Ovary (tissue), 10 donors: ENCODE measurements at regions of chr15 and their contacts with region 1.

Region 1: DNA sequence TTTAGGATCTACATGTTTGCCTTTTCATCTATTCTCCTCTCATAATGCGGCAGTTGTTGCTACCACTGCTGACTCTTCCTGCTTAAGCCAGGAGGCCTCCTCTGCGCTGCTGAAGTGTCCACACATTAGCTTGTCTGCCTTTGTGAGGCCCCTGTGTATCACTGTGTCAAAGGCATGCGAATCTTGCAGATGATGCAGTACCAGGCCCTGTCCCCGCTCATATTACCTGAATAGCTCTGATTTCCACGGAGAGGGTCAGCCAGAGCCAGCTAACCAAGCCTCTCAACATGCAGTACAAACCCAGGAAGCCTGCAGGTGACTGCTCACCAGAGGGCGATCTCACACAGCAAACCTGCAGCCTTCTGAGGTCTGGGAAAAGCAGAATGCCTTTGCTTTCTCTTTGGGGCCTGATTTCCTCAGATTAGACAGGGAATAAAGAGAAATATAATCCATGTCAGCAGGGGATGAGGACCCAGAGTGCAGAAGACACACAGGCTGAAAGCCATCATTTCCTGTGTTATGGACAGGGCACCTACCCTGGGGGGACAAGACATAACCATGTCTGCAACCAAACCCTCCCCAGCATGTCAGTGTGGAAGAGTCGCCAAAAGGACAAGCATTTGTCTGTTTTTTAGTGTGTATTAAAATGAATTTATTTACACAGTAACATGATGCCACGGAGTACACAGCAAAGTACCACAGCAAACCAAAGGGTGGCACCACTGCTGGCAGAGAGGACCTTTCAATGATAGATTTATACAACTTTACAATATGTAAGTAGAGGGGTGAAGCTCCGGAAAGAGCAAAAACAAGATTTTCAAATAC is 36.8 kb upstream of the TSPAN3 start:
- DNase-seq: peak; percentile 52 to 69 (median 62)
- H3K4me3 ChIP-seq: no peak overlapping the region
- H3K27ac ChIP-seq: no peak overlapping the region
- H3K4me1 ChIP-seq: peaks cover 6% of the 10 kb centered on the region
- H3K27me3 ChIP-seq: no peaks in the 10 kb centered on the region
- CTCF ChIP-seq: peak; percentile 34 to 74 (median 36)
- EP300 ChIP-seq: no peak
- POLR2A ChIP-seq: no peak

Region 2: DNA sequence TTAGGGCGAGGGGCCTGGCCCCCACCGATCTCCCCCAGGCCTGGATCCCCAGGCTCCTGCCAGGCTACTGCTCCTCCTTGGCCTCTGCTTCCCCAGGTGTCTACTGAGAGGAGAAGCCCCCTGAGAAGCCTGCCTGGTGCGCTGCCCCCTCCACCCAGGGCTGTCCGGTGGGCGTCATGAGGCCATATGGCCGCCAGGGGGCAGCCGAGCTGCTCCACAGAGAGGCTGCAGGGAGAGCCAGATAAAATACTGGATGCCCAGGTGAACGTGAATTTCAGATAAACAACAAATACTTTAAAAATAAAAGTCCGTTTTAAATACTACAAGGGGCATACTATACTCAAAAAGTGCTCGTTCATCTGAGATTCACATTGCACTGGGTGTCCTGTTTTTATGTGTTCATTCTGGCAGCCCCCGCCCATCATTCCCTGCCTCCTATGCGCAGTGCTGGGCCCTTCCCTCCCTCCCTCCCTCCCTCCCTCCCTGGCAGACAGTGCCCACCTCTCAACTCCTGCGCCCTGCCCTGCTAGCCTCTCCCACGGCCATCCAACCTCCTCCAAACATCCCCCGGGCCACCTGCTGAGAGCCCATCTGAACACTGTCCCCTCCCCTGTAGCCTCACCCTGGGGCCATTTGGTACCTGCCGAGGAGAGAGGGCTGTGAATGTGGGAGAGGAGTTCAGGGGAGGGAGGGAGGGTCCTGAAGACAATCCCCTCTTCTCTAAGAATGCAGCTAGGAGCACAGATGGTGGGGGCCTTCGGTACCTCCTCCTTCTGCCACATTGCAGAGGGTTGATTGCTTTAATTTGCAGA is 83.3 kb before region 1 on chr15:
- intact Hi-C with region 1: loop called in 1 of 4 experiments (anchors 5 kb)
- DNase-seq: peak; percentile 61 to 83 (median 77)
- H3K4me3 ChIP-seq: no peak overlapping the region
- H3K27ac ChIP-seq: no peak overlapping the region
- H3K4me1 ChIP-seq: peaks cover 4% of the 10 kb centered on the region
- H3K27me3 ChIP-seq: no peaks in the 10 kb centered on the region
- CTCF ChIP-seq: peak; percentile 79 to 94 (median 84)
- EP300 ChIP-seq: no peak
- POLR2A ChIP-seq: no peak

Region 3: DNA sequence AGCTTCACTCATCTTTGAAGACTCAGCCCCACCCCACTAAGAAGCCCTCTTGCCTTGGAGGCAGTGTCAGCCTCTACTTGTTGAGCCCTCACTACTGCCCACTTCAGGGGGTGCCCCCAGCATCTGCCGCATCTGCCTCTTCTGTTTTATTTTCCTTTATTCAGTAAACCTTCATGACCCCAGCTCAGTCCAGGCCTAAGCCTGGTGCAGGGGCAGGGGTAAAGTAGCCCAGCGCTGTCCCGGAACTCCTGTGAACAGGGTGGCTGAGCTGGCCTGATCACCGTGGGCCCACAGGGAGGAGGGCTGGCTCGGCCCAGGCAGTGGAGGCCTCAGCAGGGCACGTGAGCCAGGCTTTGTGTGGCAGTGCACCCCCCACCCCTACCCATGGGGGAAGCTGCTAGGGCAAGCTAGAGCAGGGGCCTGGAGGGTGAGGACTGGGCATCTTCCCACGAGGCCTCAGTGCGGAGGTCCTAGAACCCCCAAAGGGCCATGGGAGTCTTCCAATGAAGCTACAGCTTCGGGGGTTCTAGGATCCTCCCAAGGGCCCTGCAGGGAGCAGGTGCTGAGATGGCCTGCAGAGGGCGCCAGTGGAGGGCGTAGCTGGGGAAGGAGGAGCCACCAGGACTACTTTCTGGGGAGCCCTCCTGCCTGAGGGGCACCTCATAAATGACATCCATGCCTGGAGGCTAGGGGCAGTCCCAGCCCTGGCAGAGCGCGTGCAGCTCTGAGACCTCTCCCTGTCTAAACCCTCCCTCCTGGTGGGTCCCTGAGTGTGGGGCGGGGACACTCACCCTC is 72.9 kb before region 1 on chr15:
- intact Hi-C with region 1: loop called in 1 of 4 experiments (anchors 10 kb)
- DNase-seq: peak in 4 of 5 donors; percentile 31 to 64 (median 44)
- H3K4me3 ChIP-seq: no peak overlapping the region
- H3K27ac ChIP-seq: peak overlapping the region in 1 of 2 donors; percentile 15
- H3K4me1 ChIP-seq: no peaks in the 10 kb centered on the region
- H3K27me3 ChIP-seq: no peaks in the 10 kb centered on the region
- CTCF ChIP-seq: no peak
- EP300 ChIP-seq: no peak
- POLR2A ChIP-seq: no peak